IMR-90 (cell line): ENCODE measurements at regions of chr1 and their contacts with region 1.

Region 1: GRCh38 chr1:203424861-203425662 is 50.5 kb upstream of the PRELP start:
- DNase-seq: peak; percentile 53
- ATAC-seq: peak; percentile 85
- H3K4me3 ChIP-seq: no peak overlapping the region
- H3K27ac ChIP-seq: peak overlapping the region; percentile 61; the same call in 1 of the 2 replicates
- H3K4me1 ChIP-seq: peaks cover 11% of the 10 kb centered on the region; the same call in 1 of the 2 replicates
- H3K27me3 ChIP-seq: peaks cover 45% of the 10 kb centered on the region
- CTCF ChIP-seq: no peak
- POLR2A ChIP-seq: no peak
- RAD21 ChIP-seq: no peak

Region 2: DNA sequence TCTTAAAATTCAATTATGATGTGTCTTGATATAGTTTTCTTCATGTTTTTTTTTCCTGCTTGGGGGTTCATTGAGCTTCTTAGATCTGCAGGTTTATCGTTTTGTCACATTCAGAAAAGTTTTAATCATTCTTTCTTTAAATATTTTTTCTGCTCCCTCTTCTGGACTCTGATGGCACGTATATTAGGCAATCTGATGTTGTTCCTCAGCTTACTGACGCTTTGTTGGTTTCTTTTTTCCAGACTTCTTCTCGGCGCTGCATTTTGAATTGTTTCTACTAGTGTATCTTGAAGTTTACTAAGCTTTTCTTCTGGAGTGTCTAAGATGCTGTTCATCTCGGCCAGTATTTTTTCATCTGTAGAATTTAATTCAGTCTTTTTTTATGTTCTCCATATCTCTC is 29.3 kb before region 1 on chr1:
- CTCF ChIA-PET with region 1: no interaction called
- POLR2A ChIA-PET with region 1: no interaction called
- dilution Hi-C with region 1: no loop called
- in situ Hi-C with region 1: no loop called
- intact Hi-C with region 1: loop called (anchors 1 kb)
- DNase-seq: no peak
- ATAC-seq: no peak; the same call in 1 of the 2 replicates
- H3K4me3 ChIP-seq: no peak overlapping the region
- H3K27ac ChIP-seq: peak overlapping the region; percentile 9; the same call in 1 of the 2 replicates
- H3K4me1 ChIP-seq: no peaks in the 10 kb centered on the region; the same call in 1 of the 2 replicates
- H3K27me3 ChIP-seq: peaks cover 4% of the 10 kb centered on the region
- CTCF ChIP-seq: no peak
- POLR2A ChIP-seq: no peak
- RAD21 ChIP-seq: no peak